ENCODE measurements at regions of chr7 and their contacts with region 1.

Region 1: DNA sequence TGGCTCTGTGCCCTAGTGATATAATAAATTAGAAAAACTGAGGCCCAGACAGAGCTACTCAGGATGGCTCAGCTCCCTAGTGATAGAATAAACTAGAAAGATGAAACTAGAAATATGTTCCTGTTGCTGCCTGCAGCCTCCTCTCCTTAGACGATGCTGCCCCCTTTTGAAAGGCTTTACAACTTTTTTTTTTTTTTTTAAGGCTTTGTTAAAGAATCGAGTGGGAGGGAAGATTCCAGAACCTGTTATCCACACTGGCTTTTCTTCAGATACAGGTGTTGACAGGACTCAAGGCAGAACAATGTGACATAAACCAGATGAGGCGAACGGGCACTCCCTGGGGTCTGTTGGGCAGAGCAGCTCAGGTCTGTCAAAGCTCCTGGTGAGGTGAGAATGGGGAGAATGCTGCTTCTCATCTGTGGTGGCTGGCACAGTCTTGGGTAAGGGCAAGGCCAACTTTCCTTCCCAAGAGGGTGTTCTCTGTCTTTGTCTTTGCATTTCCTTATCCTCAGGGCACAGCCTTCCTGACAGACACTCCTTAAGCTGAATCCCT is 175.1 kb downstream of the COBL start:
- DNase-seq: peak; percentile 55
- H3K4me3 Mint-ChIP-seq: no peak overlapping the region
- H3K27ac Mint-ChIP-seq: no peak overlapping the region
- H3K4me1 Mint-ChIP-seq: peaks cover 27% of the 10 kb centered on the region
- H3K27me3 Mint-ChIP-seq: no peaks in the 10 kb centered on the region
- CTCF ChIP-seq: peak; percentile 71

Region 2: DNA sequence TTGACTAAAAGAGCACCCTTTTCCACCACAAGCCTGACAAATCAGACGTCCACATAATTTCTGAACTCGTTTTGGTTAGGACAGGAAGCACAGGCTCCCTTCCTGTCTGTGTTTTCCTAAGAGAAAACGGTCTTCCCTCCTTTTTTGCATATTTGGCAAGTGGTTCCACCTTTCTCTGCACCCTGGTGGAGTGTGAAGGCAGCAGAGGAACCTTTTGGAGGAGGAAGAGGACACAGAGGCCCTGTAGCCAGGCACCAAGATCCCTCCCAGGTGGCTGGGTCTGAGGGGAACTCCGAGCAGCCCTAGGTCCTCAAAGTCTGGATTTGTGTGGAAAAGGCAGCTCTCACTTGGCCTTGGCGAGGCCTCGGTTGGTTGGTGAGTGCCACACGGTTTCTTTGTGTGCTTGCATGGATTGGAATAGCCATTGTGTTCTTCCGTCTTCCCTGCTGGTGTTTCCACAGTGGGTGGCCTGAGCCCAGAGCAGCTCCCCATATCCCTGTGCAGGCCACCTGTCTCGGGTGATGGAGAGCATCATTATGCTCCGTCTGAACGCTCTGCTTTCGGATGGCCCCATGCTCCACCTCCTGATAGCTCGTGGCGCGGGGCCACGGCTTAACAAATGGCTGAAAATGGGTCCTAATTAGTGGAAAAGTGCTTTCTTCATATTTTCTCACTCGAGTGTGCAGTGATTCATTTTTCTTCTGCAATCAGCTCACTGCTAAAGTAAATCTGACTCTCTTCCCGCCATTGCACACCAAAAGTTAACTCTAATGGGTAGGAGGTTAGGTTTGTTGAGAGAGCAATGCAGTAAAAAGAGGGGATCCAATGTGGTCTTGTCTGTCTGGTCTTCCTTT is 832.8 kb before region 1 on chr7:
- CTCF ChIA-PET with region 1: interaction called, 10 read pairs
- POLR2A ChIA-PET with region 1: no interaction called
- intact Hi-C with region 1: no loop called
- DNase-seq: no peak
- H3K4me3 Mint-ChIP-seq: no peak overlapping the region
- H3K27ac Mint-ChIP-seq: no peak overlapping the region
- H3K4me1 Mint-ChIP-seq: no peaks in the 10 kb centered on the region
- H3K27me3 Mint-ChIP-seq: peaks cover 36% of the 10 kb centered on the region
- CTCF ChIP-seq: no peak

Region 3: DNA sequence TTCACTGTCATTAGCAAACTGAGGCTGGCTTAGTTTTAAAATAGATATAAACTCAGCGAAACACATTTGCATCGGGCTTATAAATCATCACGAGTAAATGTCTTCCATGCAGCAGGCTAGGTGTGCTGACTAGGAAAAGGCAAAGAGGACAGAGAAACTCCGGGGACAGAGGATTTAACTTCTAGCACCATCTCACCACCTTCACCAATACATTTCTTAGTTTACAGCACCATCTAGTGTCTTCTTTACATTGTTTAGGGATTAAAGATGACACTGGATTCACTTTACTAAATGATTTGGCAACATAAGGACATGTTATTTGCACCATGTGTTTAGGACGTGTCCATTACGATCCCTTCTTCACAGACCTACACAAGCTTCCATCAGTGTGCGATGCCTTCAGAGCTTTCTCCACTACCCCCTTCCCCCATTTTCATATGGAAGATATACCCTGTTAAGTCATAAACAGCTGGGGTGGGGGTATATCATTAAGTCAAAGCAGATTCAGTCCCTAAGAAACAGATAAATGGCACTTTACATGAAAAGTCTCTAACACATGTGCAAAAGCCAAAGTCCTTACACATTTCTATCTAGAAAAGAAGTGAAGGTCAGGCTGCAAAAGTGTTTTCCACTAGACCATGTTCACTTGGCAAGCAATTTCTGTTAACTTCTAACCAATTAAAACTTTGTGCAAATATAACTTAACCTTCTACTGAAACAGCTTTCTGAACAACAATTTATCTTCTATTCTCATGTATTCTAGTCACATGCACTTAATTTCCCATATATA is 462.1 kb before region 1 on chr7:
- CTCF ChIA-PET with region 1: interaction called, 10 read pairs
- POLR2A ChIA-PET with region 1: no interaction called
- intact Hi-C with region 1: loop called (anchors 5 kb)
- DNase-seq: peak; percentile 58
- H3K4me3 Mint-ChIP-seq: no peak overlapping the region
- H3K27ac Mint-ChIP-seq: no peak overlapping the region
- H3K4me1 Mint-ChIP-seq: peaks cover 6% of the 10 kb centered on the region
- H3K27me3 Mint-ChIP-seq: no peaks in the 10 kb centered on the region
- CTCF ChIP-seq: peak; percentile 40

Region 4: DNA sequence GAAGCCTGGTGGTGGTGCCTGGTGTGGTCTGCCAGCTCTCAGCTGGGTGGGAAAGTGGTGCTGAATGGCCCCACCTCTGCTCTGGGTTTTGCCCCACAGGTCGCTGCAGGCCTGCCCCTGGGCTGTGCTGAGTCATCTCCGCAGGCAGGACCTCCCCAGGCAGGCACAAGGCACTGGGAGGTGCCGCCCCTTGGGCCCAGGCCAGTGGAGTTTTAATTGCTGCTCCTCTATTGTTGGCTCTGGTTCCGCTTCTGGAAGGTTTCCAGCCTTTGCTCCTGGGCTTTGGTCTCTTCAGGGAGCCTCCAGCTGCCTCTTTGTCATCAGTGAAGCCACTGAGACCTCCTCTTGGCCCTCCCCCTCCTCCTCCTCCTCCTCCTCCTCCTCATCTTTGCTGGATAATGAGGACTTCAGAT is 178.6 kb before region 1 on chr7:
- CTCF ChIA-PET with region 1: no interaction called
- POLR2A ChIA-PET with region 1: no interaction called
- intact Hi-C with region 1: no loop called
- DNase-seq: peak; percentile 97
- H3K4me3 Mint-ChIP-seq: peak overlapping the region; percentile 51
- H3K27ac Mint-ChIP-seq: peak overlapping the region; percentile 55
- H3K4me1 Mint-ChIP-seq: peaks cover 18% of the 10 kb centered on the region
- H3K27me3 Mint-ChIP-seq: no peaks in the 10 kb centered on the region
- CTCF ChIP-seq: no peak

Region 5: DNA sequence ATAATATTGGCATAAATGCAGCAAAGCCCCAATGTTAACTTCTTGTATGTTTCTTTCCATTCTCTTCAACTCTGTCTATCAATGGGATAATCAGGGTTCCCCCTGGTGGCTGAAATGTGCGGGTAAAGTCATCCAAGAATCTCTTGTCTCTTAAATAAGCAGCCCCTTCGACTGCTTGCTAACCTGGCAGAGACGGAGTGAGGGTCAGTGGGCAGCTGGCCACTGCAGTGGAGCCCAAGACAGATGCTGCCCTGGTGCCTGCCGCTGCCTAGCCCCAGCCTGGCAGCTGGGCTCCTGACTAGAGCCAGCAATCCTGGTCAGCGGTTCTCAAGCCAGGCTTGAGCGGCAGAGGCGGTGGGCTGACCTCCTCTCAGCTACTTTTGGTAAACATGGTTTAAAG is 73.8 kb before region 1 on chr7:
- CTCF ChIA-PET with region 1: interaction called, 9 read pairs
- POLR2A ChIA-PET with region 1: no interaction called
- intact Hi-C with region 1: loop called (anchors 5 kb)
- DNase-seq: peak; percentile 75
- H3K4me3 Mint-ChIP-seq: no peak overlapping the region
- H3K27ac Mint-ChIP-seq: no peak overlapping the region
- H3K4me1 Mint-ChIP-seq: peaks cover 11% of the 10 kb centered on the region
- H3K27me3 Mint-ChIP-seq: no peaks in the 10 kb centered on the region
- CTCF ChIP-seq: peak; percentile 52

Region 6: GRCh38 chr7:51128545-51129435 is 12.7 kb before region 1 on chr7:
- CTCF ChIA-PET with region 1: interaction called, 22 read pairs
- POLR2A ChIA-PET with region 1: interaction called, 5 read pairs
- intact Hi-C with region 1: no loop called
- DNase-seq: no peak
- H3K4me3 Mint-ChIP-seq: no peak overlapping the region
- H3K27ac Mint-ChIP-seq: no peak overlapping the region
- H3K4me1 Mint-ChIP-seq: peaks cover 3% of the 10 kb centered on the region
- H3K27me3 Mint-ChIP-seq: no peaks in the 10 kb centered on the region
- CTCF ChIP-seq: no peak

Region 7: DNA sequence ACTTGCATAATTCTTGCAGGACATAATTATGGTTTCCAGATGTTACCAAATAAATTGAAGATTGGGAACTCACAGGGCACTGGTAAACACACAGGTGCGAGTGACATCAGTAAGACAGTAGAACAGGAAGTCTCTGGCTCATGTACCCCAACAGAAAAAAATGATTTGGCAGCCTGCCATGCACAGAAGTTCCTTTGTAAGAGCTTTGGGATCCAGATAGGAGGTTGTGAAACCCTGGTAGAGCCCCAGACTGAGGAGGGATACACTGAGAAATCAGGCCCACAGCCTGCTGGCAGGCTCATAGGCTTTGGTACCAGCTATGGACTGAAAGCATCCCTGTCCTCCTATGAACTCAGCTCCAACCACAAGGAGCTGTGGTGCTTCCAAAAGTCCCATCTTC is 57.1 kb after region 1 on chr7:
- CTCF ChIA-PET with region 1: no interaction called
- POLR2A ChIA-PET with region 1: no interaction called
- intact Hi-C with region 1: no loop called
- DNase-seq: peak; percentile 37
- H3K4me3 Mint-ChIP-seq: no peak overlapping the region
- H3K27ac Mint-ChIP-seq: no peak overlapping the region
- H3K4me1 Mint-ChIP-seq: peaks cover 5% of the 10 kb centered on the region
- H3K27me3 Mint-ChIP-seq: no peaks in the 10 kb centered on the region
- CTCF ChIP-seq: no peak

Measured in MCF 10A (cell line).